GM12878 (cell line): ENCODE measurements at regions of chr4 and their contacts with region 1.

Region 1: GRCh38 chr4:184616633-184617551 is 32.4 kb downstream of the CASP3 start:
- DNase-seq: peak; percentile 38
- ATAC-seq: peak; percentile 89
- H3K4me3 ChIP-seq: peak overlapping the region; percentile 41; the same call in 1 of the 2 replicates
- H3K27ac ChIP-seq: peak overlapping the region; percentile 34
- H3K4me1 ChIP-seq: peaks cover 10% of the 10 kb centered on the region
- H3K27me3 ChIP-seq: no peaks in the 10 kb centered on the region
- CTCF ChIP-seq: no peak
- EP300 ChIP-seq: peak in 1 of 2 experiments; percentile 17; a peak in 1 of 4 replicates
- POLR2A ChIP-seq: 0 out of 2 replicates have a peak, but pooled peaks have one; percentile 24
- RAD21 ChIP-seq: no peak

Region 2: DNA sequence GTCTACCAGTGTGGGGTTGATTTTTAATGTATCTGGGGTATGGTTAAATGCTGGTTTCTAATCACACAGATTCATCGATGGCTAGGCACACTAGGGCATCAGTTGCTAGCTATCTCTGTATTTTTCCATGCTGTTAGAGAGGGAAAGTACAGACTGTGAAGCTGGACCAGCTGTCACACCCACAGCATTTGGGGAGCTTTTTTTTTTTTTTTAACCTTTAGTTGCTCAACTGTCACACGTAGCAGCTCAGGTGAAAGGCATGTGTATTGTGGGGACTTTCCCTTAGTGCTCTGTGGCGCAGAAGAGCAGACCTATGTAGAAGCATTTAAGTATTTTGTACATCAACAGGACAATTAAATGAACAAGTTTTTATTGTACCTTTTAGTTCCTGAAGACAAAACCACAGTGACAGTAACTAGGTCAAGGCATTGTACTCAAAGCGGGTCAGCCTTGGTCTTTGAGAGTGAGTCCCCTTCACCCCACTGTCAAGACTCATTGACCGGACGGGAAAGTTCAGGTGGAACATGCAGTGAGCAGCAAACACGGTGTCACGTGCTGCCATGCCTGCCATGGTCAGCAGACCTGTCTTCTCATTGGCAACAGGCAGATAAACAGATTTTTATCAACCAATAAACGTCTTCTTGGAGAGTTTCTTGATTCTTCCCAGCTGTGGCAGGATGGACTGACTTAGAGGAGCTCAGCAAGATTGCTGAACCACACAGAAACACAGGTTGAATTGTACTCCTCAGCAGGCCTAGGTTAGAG is 33.0 kb before region 1 on chr4:
- CTCF ChIA-PET with region 1: no interaction called
- POLR2A ChIA-PET with region 1: interaction called, 5 read pairs
- RAD21 ChIA-PET with region 1: interaction called, 17 read pairs
- SMC1A ChIA-PET with region 1: interaction called, 5 read pairs
- in situ Hi-C with region 1: no loop called
- intact Hi-C with region 1: no loop called
- DNase-seq: peak; percentile 41
- ATAC-seq: peak; percentile 78
- H3K4me3 ChIP-seq: no peak overlapping the region
- H3K27ac ChIP-seq: peak overlapping the region; percentile 50
- H3K4me1 ChIP-seq: peaks cover 24% of the 10 kb centered on the region
- H3K27me3 ChIP-seq: no peaks in the 10 kb centered on the region
- CTCF ChIP-seq: no peak
- EP300 ChIP-seq: peak in 1 of 2 experiments; percentile 61; a peak in 2 of 4 replicates
- POLR2A ChIP-seq: no peak
- RAD21 ChIP-seq: no peak

Region 3: DNA sequence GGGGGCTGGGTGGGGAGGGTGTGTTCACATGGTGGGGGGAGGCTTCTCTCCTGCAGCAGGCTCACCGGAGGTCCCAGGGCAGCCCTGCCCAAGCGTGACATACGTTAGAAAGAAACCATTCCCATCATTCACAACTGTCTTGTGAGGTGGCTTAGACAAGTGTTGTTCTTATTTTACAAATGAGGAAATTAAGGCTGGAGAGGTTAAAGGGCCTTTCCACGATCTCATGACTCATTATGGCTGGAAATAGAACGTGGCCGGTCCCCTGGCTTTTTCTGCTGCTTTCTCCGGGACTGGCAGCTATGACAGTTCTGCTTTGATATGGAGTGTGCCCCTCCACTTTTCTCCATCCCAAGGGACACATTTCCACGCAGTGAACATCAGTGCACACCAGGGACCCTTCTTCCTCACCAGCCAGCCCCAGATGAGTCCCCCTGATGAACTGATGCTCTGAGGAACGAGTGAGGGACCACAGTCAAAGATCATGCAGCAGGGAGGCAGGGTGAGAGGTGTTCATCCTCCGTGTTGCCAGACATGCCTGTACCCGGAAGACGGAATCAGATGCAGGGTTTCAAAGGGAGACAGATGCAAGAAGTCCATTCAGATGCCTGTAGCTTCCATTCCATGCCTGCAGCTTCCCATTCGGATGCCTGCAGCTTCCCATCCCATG is 272.9 kb after region 1 on chr4:
- CTCF ChIA-PET with region 1: no interaction called
- POLR2A ChIA-PET with region 1: no interaction called
- RAD21 ChIA-PET with region 1: no interaction called
- SMC1A ChIA-PET with region 1: no interaction called
- in situ Hi-C with region 1: no loop called
- intact Hi-C with region 1: no loop called
- DNase-seq: no peak
- ATAC-seq: peak; percentile 46
- H3K4me3 ChIP-seq: no peak overlapping the region
- H3K27ac ChIP-seq: no peak overlapping the region
- H3K4me1 ChIP-seq: peaks cover 4% of the 10 kb centered on the region; the same call in 1 of the 2 replicates
- H3K27me3 ChIP-seq: no peaks in the 10 kb centered on the region
- CTCF ChIP-seq: no peak
- EP300 ChIP-seq: no peak
- POLR2A ChIP-seq: no peak
- RAD21 ChIP-seq: no peak